Head of caudate nucleus (tissue), 42 donors: ENCODE measurements at regions of chr2 and their contacts with region 1.

Region 1: DNA sequence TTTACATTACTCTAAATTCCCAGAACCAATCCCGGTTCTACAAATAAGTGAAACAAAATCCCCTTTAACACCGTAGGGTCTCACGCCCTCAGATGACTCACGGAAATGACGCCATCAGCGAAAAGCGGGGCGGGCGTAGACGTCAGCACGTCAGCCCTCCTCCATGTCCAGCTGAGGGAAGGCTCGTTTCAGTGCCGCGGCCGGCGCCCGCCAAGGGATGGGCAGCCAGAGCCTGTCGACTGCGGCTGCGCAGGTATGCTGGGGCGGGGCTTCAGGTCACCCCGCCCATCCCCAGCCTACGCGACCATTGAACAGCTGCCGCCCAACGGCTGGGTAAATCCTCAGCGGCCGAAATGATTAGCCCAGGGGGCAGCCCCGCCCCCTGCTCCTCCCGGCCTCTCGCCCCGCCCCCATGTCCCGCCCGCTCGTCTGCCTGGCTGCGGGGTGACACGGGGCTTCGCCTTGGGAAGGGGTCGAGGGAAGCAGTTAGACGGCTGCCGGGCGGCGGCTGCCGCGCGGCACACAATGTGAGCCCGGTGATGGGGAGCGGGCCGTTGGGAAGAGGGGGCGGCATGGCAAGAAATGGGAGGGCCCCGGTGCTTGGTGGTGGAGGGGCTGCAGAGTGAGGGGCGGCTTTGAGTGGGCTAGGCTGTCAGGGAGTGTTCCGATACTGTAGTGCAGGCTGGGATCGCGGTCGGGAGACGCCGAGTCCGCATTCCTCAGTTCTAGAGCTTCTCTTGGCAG is at the start of gene NBEAL1:
- DNase-seq: peak; percentile 96 to 99 (median 98)

Region 2: GRCh38 chr2:202634556-202635427 is 379.8 kb before region 1 on chr2 and contains the start of gene FAM117B:
- intact Hi-C with region 1: loop called (anchors 5 kb)
- DNase-seq: peak; percentile 96 to 100 (median 99)

Region 3: GRCh38 chr2:202918860-202919259 is 95.8 kb before region 1 on chr2:
- intact Hi-C with region 1: no loop called
- DNase-seq: no peak